ENCODE measurements at regions of chr12 and their contacts with region 1.

Region 1: GRCh38 chr12:101830367-101831325 is at the start of gene GNPTAB:
- DNase-seq: peak; percentile 98
- H3K4me3 Mint-ChIP-seq: peak within 1 kb of the TSS; percentile 96
- H3K27ac Mint-ChIP-seq: peak within 1 kb of the TSS; percentile 92
- H3K4me1 Mint-ChIP-seq: peaks cover 37% of the 10 kb centered on the region
- H3K27me3 Mint-ChIP-seq: no peaks in the 10 kb centered on the region
- total RNA-seq, gene GNPTAB: 48.2 and 57.2 TPM in 2 replicates

Region 2: GRCh38 chr12:100489251-100489820 is 1341.3 kb before region 1 on chr12:
- intact Hi-C with region 1: no loop called
- DNase-seq: no peak
- H3K4me3 Mint-ChIP-seq: no peak overlapping the region
- H3K27ac Mint-ChIP-seq: no peak overlapping the region
- H3K4me1 Mint-ChIP-seq: no peaks in the 10 kb centered on the region
- H3K27me3 Mint-ChIP-seq: no peaks in the 10 kb centered on the region

Region 3: DNA sequence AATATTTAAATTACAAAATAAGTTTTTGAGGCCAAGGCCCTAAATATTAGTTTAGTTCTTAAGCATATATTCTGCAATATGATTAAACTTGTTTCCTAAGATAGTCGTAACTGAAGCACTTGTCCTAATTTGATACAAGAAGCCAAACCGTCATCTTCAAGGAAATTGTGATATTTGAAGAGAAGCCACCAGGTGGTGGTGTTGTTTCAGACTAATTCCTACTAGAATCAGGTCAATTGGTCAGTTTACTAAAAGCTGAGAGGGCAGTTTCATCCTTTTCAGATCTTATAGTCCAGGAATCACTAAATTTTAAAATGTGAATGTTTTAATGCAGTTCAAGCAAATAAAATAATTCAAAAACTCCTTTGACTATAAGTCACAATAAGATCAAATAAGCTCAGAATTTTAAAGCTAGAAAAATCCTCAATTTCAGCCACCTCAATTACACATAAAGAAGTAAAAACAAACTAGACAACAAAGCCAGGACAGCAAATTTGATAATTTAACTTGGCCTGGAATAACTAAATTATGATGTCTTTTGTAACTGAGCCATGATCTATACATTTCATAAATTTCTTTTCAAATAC is 416.0 kb before region 1 on chr12:
- intact Hi-C with region 1: loop called (anchors 2 kb)
- DNase-seq: peak; percentile 74
- H3K4me3 Mint-ChIP-seq: no peak overlapping the region
- H3K27ac Mint-ChIP-seq: no peak overlapping the region
- H3K4me1 Mint-ChIP-seq: no peaks in the 10 kb centered on the region
- H3K27me3 Mint-ChIP-seq: peaks cover 22% of the 10 kb centered on the region

Region 4: GRCh38 chr12:101773650-101774162 is 56.9 kb before region 1 on chr12:
- intact Hi-C with region 1: loop called (anchors 1 kb)
- DNase-seq: peak; percentile 89
- H3K4me3 Mint-ChIP-seq: no peak overlapping the region
- H3K27ac Mint-ChIP-seq: no peak overlapping the region
- H3K4me1 Mint-ChIP-seq: peaks cover 24% of the 10 kb centered on the region
- H3K27me3 Mint-ChIP-seq: no peaks in the 10 kb centered on the region

Region 5: DNA sequence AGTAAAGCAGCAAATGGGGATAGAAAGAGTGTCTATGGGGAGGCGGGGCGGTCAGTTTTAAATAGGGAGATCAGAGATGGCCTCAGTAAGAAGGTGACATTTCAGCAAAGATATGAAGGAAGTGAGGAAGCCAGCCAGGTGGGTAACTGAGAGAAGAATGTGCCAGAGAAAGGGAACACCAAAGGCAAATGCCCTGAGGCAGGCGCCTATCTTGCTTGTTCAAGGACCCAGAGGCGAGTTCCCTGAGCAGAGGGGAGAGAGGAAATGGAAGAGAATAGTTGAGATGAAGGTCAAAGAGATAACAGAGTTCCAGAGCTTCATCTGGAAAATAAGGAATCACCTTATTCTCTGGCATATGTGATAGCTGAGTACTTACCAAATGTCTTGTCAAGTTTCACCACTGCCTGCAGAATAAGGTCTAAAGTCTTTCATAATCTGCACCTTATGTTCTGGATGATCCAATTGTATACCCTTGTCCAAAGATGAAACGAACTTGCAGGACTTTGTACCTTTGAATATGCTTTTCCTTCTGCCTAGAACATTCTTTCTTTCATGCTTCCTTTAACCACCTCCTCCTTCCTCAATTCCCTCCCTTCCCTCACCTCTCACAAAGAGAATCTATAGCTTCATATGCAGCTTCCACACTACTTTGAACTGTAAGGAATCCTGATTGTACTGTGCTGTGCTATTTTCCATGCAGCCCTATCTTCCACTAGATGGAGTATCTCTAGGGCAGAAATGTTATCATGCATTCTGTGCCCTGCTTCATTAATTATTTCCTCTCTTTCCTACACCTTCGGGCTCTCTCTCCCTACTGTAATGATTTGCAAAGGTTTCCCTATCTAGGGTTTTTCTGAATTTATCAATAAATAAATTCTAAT is 38.4 kb before region 1 on chr12:
- intact Hi-C with region 1: loop called (anchors 1 kb)
- DNase-seq: no peak
- H3K4me3 Mint-ChIP-seq: no peak overlapping the region
- H3K27ac Mint-ChIP-seq: peak overlapping the region; percentile 72
- H3K4me1 Mint-ChIP-seq: peaks cover 40% of the 10 kb centered on the region
- H3K27me3 Mint-ChIP-seq: no peaks in the 10 kb centered on the region

Region 6: GRCh38 chr12:101876861-101877815 is 46.5 kb after region 1 on chr12 and contains the start of gene DRAM1:
- intact Hi-C with region 1: loop called (anchors 2 kb)
- DNase-seq: peak; percentile 94
- H3K4me3 Mint-ChIP-seq: peak within 1 kb of the TSS; percentile 95
- H3K27ac Mint-ChIP-seq: peak within 1 kb of the TSS; percentile 90
- H3K4me1 Mint-ChIP-seq: peaks cover 16% of the 10 kb centered on the region
- H3K27me3 Mint-ChIP-seq: peaks cover 2% of the 10 kb centered on the region
- total RNA-seq, gene DRAM1: 4.3 and 4.6 TPM in 2 replicates

Measured in activated CD4-positive, alpha-beta T cell treated with anti-CD3 and anti-CD28 coated beads, Interleukin-2, amount 10 ng/mL, durations not matched to agents 24 days and 14 days (primary cell).